ENCODE measurements at regions of chr11 and their contacts with region 1.

Region 1: DNA sequence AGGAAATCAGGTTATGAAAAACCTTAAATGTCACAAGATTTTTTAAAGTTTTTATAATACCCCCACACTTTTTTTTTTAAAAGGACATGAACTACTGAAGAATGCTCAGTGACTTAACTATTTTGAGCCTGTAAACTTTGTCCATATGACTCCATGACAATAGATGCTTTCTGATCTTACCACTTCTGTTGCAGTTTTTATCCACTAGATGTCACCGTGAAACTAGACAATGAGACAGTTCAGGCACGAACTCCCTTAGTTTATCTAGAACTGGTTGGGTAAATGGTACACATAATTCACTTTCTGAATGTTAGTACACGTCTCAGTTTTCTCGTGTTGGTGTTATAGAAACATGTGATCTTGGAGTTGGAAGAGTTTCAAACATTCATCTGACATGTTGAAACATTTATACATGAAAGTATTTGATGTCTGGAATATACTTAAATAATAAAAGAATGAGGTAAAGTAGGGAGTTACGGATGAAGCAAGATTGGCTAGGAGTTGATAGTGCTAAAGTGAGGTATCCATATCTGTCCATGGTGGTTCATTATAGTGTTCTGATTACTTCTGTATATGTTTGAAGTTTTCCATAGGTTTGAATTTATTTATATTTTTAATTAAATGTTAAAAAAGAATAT is 8.1 kb downstream of the CCDC15 start:
- DNase-seq: peak; percentile 27
- H3K4me3 Mint-ChIP-seq: no peak overlapping the region
- H3K27ac Mint-ChIP-seq: no peak overlapping the region
- H3K4me1 Mint-ChIP-seq: no peaks in the 10 kb centered on the region
- H3K27me3 Mint-ChIP-seq: no peaks in the 10 kb centered on the region

Region 2: DNA sequence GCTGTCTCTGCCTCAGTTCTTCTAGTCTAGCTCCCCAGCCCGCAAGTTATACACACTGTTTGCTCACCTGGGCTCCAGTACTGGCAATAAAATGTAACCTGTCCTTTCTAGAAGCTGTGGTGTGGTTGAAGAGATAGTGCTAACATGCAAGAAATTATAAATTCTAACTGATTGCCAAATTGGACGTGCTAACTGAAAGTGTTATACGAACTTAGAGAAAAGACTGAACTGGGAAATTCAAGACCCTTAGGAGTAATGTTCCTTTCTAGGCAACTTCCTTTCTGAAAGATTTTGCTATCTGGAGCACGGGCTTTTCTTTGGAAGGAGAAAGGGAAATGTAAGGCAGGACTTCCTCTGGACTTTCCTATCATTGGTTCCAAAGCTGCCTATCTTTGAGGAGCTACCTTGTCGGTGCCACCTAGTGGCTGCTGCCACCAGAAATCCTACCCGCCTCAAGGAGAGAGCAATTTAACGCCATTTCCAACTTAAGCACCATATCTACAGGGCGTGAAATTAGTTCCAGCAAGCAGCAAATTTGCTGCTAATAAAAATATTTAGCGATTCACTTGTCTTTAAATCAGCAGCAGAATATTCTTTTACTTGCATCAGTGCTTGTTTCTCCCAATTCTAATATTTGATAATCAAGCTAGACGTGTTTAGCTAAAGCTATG is 162.0 kb after region 1 on chr11:
- intact Hi-C with region 1: loop called (anchors 1 kb)
- DNase-seq: no peak
- H3K4me3 Mint-ChIP-seq: no peak overlapping the region
- H3K27ac Mint-ChIP-seq: no peak overlapping the region
- H3K4me1 Mint-ChIP-seq: no peaks in the 10 kb centered on the region
- H3K27me3 Mint-ChIP-seq: peaks cover 33% of the 10 kb centered on the region

Region 3: GRCh38 chr11:125141686-125142535 is 179.8 kb after region 1 on chr11:
- intact Hi-C with region 1: loop called (anchors 1 kb)
- DNase-seq: peak; percentile 23
- H3K4me3 Mint-ChIP-seq: no peak overlapping the region
- H3K27ac Mint-ChIP-seq: no peak overlapping the region
- H3K4me1 Mint-ChIP-seq: no peaks in the 10 kb centered on the region
- H3K27me3 Mint-ChIP-seq: peaks cover 24% of the 10 kb centered on the region

Region 4: DNA sequence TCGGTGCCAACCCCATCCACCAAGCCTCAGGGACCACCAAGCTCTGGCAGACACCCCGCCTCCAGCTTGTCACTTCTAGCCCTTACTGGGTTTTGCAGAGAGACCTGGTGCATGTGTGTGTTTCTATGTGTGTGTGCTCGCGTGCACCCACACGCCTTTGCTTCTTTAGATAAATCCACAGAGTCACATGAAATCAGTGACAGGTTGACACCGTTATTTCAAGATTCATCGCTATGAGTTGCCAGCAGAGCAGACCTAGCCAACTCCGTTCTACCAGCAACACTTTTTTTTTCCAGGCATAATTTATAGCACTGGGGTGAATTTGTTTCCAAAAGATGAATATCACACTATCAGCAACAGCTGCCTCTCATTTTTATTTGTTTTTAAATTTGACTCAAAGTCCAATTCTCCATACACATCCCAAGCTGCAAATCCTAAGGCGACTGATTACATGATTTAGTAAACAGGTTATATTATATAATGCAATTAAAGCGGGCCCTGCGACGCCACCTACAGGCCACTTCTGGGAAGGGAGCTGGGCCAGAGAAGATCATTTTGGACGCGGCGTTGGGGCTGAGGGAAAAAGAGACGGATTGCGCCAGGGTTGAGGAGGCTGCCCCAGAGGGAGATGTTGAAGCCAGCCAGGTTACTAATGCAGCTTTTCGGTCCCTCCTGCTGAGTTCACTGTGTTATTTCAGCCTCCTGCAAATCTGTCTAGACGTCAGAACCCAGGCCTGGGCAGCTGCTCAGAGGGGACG is 383.5 kb after region 1 on chr11:
- intact Hi-C with region 1: loop called (anchors 1 kb)
- DNase-seq: peak; percentile 9
- H3K4me3 Mint-ChIP-seq: no peak overlapping the region
- H3K27ac Mint-ChIP-seq: no peak overlapping the region
- H3K4me1 Mint-ChIP-seq: no peaks in the 10 kb centered on the region
- H3K27me3 Mint-ChIP-seq: peaks cover 8% of the 10 kb centered on the region

Region 5: GRCh38 chr11:125404776-125405435 is 442.8 kb after region 1 on chr11:
- intact Hi-C with region 1: loop called (anchors 1 kb)
- DNase-seq: peak; percentile 48
- H3K4me3 Mint-ChIP-seq: no peak overlapping the region
- H3K27ac Mint-ChIP-seq: no peak overlapping the region
- H3K4me1 Mint-ChIP-seq: peaks cover 7% of the 10 kb centered on the region
- H3K27me3 Mint-ChIP-seq: peaks cover 43% of the 10 kb centered on the region

Region 6: DNA sequence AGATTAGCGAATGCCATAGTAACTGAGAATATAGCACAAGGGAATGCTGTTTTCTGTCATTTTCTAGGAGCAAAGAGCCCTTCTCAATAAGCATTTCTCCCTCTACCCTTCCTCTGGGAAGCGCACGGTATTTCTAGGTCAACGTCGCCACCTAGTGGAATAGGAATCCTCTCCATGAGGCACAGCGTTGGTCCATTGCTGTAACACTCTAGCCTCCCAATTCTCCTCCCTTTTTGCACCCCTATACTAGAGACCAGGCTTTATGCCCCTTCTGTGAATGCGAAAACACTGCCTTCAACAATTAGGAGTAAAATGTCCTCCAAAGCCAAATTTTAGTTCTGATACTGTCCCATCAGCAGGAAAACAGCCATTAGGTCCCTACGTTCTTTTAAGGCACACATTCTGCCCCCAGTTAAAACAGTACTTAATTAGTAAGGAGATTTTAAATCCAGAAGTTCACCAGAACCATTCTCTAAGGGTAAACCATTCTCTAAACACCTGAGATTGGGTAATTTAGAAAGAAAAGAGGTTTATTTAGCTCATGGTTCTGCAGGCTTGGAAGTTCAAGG is 912.5 kb after region 1 on chr11:
- intact Hi-C with region 1: loop called (anchors 1 kb)
- DNase-seq: no peak
- H3K4me3 Mint-ChIP-seq: no peak overlapping the region
- H3K27ac Mint-ChIP-seq: no peak overlapping the region
- H3K4me1 Mint-ChIP-seq: no peaks in the 10 kb centered on the region
- H3K27me3 Mint-ChIP-seq: peaks cover 9% of the 10 kb centered on the region

Measured in activated T-helper 1 cell treated with anti-CD3 and anti-CD28 coated beads, Interleukin-12 subunit alpha, Interleukin-12 subunit beta, Interleukin-2, Interleukin-4 antibody, amounts not matched to agents 30 ng/mL and 10 ng/mL and 1 ng/mL, durations not matched to agents 14 hours and 24 hours and 36 hours (primary cell).